Activated CD8-positive, alpha-beta T cell treated with anti-CD3 and anti-CD28 coated beads, Interleukin-2, amount 10 ng/mL, durations not matched to agents 7 days and 5 days (primary cell): ENCODE measurements at regions of chr22 and their contacts with region 1.

Region 1: GRCh38 chr22:39514373-39514973 is 5.9 kb upstream of the ATF4 start:
- DNase-seq: peak; percentile 68
- ATAC-seq: no peak
- H3K4me3 Mint-ChIP-seq: no peak overlapping the region
- H3K27ac Mint-ChIP-seq: peak overlapping the region; percentile 28
- H3K4me1 Mint-ChIP-seq: peaks cover 40% of the 10 kb centered on the region
- H3K27me3 Mint-ChIP-seq: no peaks in the 10 kb centered on the region

Region 2: GRCh38 chr22:39343259-39344048 is 171.0 kb before region 1 on chr22:
- CTCF ChIA-PET with region 1: interaction called, 11 read pairs
- POLR2A ChIA-PET with region 1: no interaction called
- DNase-seq: peak; percentile 73
- ATAC-seq: peak; percentile 89
- H3K4me3 Mint-ChIP-seq: no peak overlapping the region
- H3K27ac Mint-ChIP-seq: no peak overlapping the region
- H3K4me1 Mint-ChIP-seq: peaks cover 4% of the 10 kb centered on the region
- H3K27me3 Mint-ChIP-seq: peaks cover 30% of the 10 kb centered on the region

Region 3: DNA sequence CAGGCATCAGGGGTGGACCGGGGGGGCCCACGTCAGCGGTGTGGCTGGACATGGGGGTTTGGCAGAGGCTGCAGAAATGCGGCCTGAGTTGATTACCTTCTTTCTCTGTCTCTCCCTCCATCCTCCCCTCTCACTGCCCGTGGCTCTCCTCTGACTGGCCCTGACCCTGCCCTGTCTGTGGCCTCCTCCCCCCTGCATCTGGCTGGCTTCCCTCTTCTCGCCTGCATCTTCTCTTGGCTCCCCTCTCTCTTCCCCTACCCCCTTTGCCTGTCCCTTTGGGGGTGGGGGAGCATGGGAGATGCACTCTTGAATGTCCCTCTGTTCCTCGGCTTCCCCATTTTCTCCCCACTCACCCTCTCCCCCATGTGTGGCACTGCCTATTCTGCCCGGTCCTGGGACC is 138.8 kb before region 1 on chr22:
- CTCF ChIA-PET with region 1: no interaction called
- POLR2A ChIA-PET with region 1: no interaction called
- DNase-seq: no peak
- ATAC-seq: no peak
- H3K4me3 Mint-ChIP-seq: no peak overlapping the region
- H3K27ac Mint-ChIP-seq: no peak overlapping the region
- H3K4me1 Mint-ChIP-seq: no peaks in the 10 kb centered on the region
- H3K27me3 Mint-ChIP-seq: no peaks in the 10 kb centered on the region

Region 4: GRCh38 chr22:39490135-39490798 is 24.2 kb before region 1 on chr22:
- CTCF ChIA-PET with region 1: interaction called, 65 read pairs
- POLR2A ChIA-PET with region 1: interaction called, 13 read pairs
- DNase-seq: peak; percentile 89
- ATAC-seq: peak; percentile 99
- H3K4me3 Mint-ChIP-seq: peak overlapping the region; percentile 37
- H3K27ac Mint-ChIP-seq: peak overlapping the region; percentile 33
- H3K4me1 Mint-ChIP-seq: peaks cover 39% of the 10 kb centered on the region
- H3K27me3 Mint-ChIP-seq: no peaks in the 10 kb centered on the region

Region 5: DNA sequence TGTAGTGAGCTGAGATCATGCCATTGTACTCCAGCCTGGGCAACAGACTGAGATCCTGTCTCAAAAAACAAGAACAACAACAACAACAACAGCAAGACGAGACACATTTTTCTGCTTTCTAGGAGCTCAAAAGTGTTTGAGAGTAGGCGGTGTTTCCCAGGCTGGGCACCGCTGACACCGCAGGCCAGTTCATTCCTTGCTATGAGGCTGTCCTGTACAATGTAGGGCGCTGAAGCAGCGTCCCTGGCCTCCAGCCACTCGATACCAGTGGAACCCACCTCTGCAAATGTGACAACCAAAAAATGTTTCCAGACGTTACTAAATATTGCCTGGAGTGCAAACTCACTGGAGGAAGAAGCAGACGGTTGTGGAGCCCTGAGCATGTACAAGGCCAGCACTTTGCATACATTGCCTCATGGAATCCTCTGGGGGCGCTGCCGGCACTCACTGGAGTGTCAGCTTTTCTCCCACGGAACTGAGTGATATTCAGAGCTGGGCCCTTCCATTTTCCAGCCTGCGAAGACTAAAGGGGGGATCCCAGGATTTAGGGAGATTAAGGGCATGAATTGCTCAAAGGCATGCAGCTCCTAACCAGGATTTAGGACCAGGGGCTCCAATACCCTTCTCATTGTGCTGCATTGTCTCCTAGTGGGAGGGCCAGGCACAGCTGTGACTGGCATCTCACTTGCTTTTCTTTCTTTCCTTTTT is 18.2 kb before region 1 on chr22:
- CTCF ChIA-PET with region 1: interaction called, 65 read pairs
- POLR2A ChIA-PET with region 1: interaction called, 43 read pairs
- DNase-seq: peak; percentile 73
- ATAC-seq: peak; percentile 80
- H3K4me3 Mint-ChIP-seq: no peak overlapping the region
- H3K27ac Mint-ChIP-seq: no peak overlapping the region
- H3K4me1 Mint-ChIP-seq: peaks cover 25% of the 10 kb centered on the region
- H3K27me3 Mint-ChIP-seq: peaks cover 6% of the 10 kb centered on the region

Region 6: DNA sequence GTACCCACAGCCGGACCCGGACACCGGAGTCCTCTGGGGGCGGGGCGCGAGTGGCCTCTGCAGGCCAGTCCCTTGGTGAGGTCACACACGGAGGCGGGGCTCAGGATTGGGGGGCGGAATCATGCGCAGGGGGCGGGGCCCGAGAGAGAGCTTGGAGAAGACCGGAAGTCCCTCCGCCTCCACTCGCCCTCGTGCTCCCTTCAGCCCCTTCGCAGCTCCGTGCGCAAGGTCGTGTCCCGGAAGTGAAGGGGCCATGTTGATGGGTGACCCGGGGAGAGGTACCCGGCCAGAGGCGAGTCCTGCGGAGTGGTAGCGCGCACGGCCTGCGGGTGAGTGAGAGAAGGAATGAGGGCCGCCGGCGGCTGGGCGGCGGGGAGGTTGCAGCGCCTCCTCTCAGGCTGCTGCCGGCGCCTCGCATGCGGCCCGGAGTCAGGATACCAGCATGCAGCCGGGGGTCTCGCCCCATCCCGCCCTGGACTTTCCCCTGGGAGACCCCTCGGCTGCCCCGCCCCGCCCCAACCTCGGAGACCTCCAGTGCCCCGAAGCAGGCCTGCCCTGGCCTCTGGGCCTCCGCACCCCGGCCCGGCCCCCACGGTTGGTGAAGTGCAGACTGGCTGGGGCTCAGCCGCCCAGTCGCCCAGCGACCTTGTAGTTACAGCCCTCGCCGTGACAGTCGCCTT is 12.2 kb before region 1 on chr22 and contains the start of gene MIEF1:
- CTCF ChIA-PET with region 1: interaction called, 42 read pairs
- POLR2A ChIA-PET with region 1: interaction called, 43 read pairs
- DNase-seq: peak; percentile 95
- ATAC-seq: peak; percentile 98
- H3K4me3 Mint-ChIP-seq: peak within 1 kb of the TSS; percentile 98
- H3K27ac Mint-ChIP-seq: peak within 1 kb of the TSS; percentile 97
- H3K4me1 Mint-ChIP-seq: peaks cover 41% of the 10 kb centered on the region
- H3K27me3 Mint-ChIP-seq: peaks cover 6% of the 10 kb centered on the region
- total RNA-seq, gene MIEF1: 37.9 to 38.2 TPM